Vagina (tissue), 2 donors: ENCODE measurements at regions of chr12 and their contacts with region 1.

Region 1: DNA sequence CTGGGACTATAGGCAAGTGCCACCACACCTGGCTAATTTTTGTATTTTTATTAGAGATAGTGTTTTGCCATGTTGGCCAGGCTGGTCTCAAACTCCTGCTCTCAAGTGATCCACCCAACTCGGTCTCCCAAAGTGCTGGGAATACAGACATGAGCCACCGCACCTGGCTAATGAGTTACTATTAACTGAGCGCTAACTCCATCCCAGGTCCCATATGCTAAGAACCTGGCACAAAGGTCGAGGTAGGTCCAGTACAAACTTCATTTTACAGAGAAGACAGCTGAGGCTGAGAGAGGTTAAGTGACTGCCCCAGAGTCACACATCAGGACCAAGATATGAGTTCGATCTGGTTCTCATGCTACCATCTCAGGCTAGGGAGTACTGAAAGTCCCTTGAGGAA is 4.5 kb upstream of the PLA2G1B start:
- DNase-seq: no peak
- H3K4me3 ChIP-seq: no peak overlapping the region
- H3K27ac ChIP-seq: no peak overlapping the region
- H3K4me1 ChIP-seq: no peaks in the 10 kb centered on the region
- H3K27me3 ChIP-seq: no peaks in the 10 kb centered on the region
- CTCF ChIP-seq: no peak
- POLR2A ChIP-seq: no peak

Region 2: GRCh38 chr12:120347766-120348165 is 15.7 kb after region 1 on chr12:
- intact Hi-C with region 1: loop called (anchors 1 kb)
- DNase-seq: no peak
- H3K4me3 ChIP-seq: no peak overlapping the region
- H3K27ac ChIP-seq: no peak overlapping the region
- H3K4me1 ChIP-seq: no peaks in the 10 kb centered on the region
- H3K27me3 ChIP-seq: no peaks in the 10 kb centered on the region
- CTCF ChIP-seq: no peak
- POLR2A ChIP-seq: no peak